CD4-positive, alpha-beta memory T cell (primary cell): ENCODE measurements at regions of chr4 and their contacts with region 1.

Region 1: GRCh38 chr4:142485452-142485851 is 360.6 kb downstream of the INPP4B start:
- DNase-seq: no peak
- H3K4me3 ChIP-seq: no peak overlapping the region
- H3K4me3 Mint-ChIP-seq: no peak overlapping the region
- H3K27ac ChIP-seq: no peak overlapping the region
- H3K27ac Mint-ChIP-seq: peak overlapping the region in 1 of 7 donors; percentile 8
- H3K4me1 ChIP-seq: peaks cover 7% of the 10 kb centered on the region
- H3K4me1 Mint-ChIP-seq: peaks cover 7 to 17% (median 13%) of the 10 kb centered on the region in 4 donors
- H3K27me3 ChIP-seq: no peaks in the 10 kb centered on the region
- H3K27me3 Mint-ChIP-seq: no peaks in the 10 kb centered on the region

Region 2: GRCh38 chr4:142452161-142452855 is 33.1 kb before region 1 on chr4:
- CTCF ChIA-PET with region 1: no interaction called
- POLR2A ChIA-PET with region 1: no interaction called
- intact Hi-C with region 1: loop called (anchors 5 kb)
- DNase-seq: no peak
- H3K4me3 ChIP-seq: no peak overlapping the region
- H3K4me3 Mint-ChIP-seq: no peak overlapping the region
- H3K27ac ChIP-seq: no peak overlapping the region
- H3K27ac Mint-ChIP-seq: no peak overlapping the region
- H3K4me1 ChIP-seq: no peaks in the 10 kb centered on the region
- H3K4me1 Mint-ChIP-seq: peaks cover 0 to 6% (median 4%) of the 10 kb centered on the region in 4 donors
- H3K27me3 ChIP-seq: no peaks in the 10 kb centered on the region
- H3K27me3 Mint-ChIP-seq: no peaks in the 10 kb centered on the region